A549 (cell line): ENCODE measurements at regions of chr3 and their contacts with region 1.

Region 1: GRCh38 chr3:107271787-107272387 is 105.4 kb upstream of the CCDC54 start:
- DNase-seq: peak; percentile 21 to 41
- ATAC-seq: peak; percentile 87 to 91
- H3K4me3 ChIP-seq: no peak overlapping the region
- H3K27ac ChIP-seq: no peak overlapping the region
- H3K4me1 ChIP-seq: no peaks in the 10 kb centered on the region
- CTCF ChIP-seq: peak; percentile 73
- EP300 ChIP-seq: no peak
- POLR2A ChIP-seq: no peak
- RAD21 ChIP-seq: peak; percentile 74 to 82

Region 2: DNA sequence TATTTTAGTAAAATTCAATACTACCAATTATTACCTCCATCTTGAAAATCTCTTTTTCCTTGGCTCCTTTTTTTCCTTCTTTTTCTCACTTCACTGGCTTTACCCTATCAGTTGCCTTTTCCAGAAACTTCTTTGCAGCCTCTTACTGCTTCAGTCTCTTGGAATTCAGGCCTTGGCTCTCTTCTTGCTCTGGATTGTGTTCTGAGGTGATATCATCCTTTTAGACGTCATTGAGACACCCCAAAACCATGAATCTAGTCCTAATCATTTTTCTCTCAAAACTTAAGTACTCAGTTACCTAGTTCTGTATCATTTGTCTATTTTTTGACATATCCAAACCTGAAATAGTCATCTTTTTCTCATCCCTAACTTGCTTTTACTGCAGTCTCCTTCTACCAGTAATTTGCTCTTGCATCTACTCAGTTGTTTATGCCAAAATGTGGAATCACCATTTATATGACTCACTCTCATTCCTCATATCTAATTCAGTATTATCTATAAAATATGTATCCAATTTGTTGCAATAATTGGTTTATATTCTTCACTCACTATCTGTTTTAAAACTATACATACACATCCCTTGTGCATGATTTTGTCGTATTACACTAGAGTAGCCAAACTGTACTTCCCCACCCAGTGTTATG is 597.8 kb before region 1 on chr3:
- CTCF ChIA-PET with region 1: no interaction called
- POLR2A ChIA-PET with region 1: no interaction called
- DNase-seq: no peak
- ATAC-seq: no peak
- H3K4me3 ChIP-seq: no peak overlapping the region
- H3K27ac ChIP-seq: no peak overlapping the region
- H3K4me1 ChIP-seq: no peaks in the 10 kb centered on the region
- CTCF ChIP-seq: no peak
- EP300 ChIP-seq: no peak
- POLR2A ChIP-seq: no peak
- RAD21 ChIP-seq: no peak

Region 3: DNA sequence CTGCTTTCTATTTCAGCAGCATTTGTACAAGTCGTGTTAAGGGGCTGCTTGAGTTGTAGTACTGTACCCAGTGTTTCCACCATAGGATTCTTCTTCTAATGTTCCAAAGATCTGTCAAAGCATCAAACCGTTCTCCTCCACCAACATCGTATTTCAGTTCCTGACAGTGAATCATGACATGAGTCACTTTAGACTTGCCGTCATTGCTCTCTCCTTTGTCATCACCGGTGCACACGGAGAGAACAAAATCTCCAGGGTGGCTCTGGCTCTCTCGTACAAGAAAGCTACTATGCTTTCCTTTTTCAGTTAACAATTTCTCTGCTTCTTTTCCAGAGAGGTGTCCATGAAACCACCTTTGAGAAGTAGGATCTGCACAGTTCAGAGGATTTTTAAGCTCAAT is 165.6 kb before region 1 on chr3:
- CTCF ChIA-PET with region 1: no interaction called
- POLR2A ChIA-PET with region 1: no interaction called
- DNase-seq: peak; percentile 10 to 22
- ATAC-seq: peak; percentile 64 to 86; a peak in 5 of 6 replicates
- H3K4me3 ChIP-seq: no peak overlapping the region
- H3K27ac ChIP-seq: no peak overlapping the region; a peak in 1 of 6 replicates
- H3K4me1 ChIP-seq: no peaks in the 10 kb centered on the region
- CTCF ChIP-seq: no peak
- EP300 ChIP-seq: no peak
- POLR2A ChIP-seq: no peak
- RAD21 ChIP-seq: no peak

Region 4: GRCh38 chr3:107258300-107258699 is 13.6 kb before region 1 on chr3:
- CTCF ChIA-PET with region 1: interaction called, 16 read pairs
- POLR2A ChIA-PET with region 1: no interaction called
- DNase-seq: no peak
- ATAC-seq: no peak
- H3K4me3 ChIP-seq: no peak overlapping the region
- H3K27ac ChIP-seq: no peak overlapping the region
- H3K4me1 ChIP-seq: no peaks in the 10 kb centered on the region
- CTCF ChIP-seq: no peak
- EP300 ChIP-seq: no peak
- POLR2A ChIP-seq: no peak
- RAD21 ChIP-seq: no peak

Region 5: DNA sequence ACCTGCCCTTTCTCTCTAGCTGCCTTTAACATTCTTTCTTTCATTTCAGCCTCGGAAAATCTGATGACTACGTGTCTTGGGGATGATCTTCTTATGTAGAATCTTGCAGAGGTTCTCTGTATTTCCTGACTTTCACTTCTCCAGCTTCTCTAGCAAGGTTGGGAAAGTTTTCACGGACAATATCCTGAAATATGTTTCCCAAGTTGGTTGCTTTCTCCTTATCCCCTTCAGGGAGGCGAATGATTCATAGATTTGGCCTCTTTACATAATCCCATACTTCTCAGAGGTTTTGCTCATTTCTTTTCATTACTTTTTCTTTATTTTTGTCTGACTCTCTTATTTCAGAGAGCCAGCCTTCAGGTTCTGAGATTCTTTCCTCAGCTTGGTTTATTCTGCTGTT is 43.3 kb after region 1 on chr3:
- CTCF ChIA-PET with region 1: interaction called, 13 read pairs
- POLR2A ChIA-PET with region 1: no interaction called
- DNase-seq: no peak
- ATAC-seq: no peak
- H3K4me3 ChIP-seq: no peak overlapping the region
- H3K27ac ChIP-seq: no peak overlapping the region
- H3K4me1 ChIP-seq: no peaks in the 10 kb centered on the region
- CTCF ChIP-seq: no peak
- EP300 ChIP-seq: no peak
- POLR2A ChIP-seq: no peak
- RAD21 ChIP-seq: no peak

Region 6: GRCh38 chr3:107377151-107377550 is 105.3 kb after region 1 on chr3 and contains the start of gene CCDC54:
- CTCF ChIA-PET with region 1: no interaction called
- POLR2A ChIA-PET with region 1: no interaction called
- DNase-seq: peak in 1 of 2 experiments; percentile 9
- ATAC-seq: no peak
- H3K4me3 ChIP-seq: no peak within 1 kb of the TSS
- H3K27ac ChIP-seq: no peak within 1 kb of the TSS
- H3K4me1 ChIP-seq: no peaks in the 10 kb centered on the region
- CTCF ChIP-seq: no peak
- EP300 ChIP-seq: no peak
- POLR2A ChIP-seq: no peak
- RAD21 ChIP-seq: no peak
- polyA plus RNA-seq, gene CCDC54: not detected in 2 replicates

Region 7: GRCh38 chr3:107387555-107387954 is 115.7 kb after region 1 on chr3:
- CTCF ChIA-PET with region 1: no interaction called
- POLR2A ChIA-PET with region 1: no interaction called
- DNase-seq: no peak
- ATAC-seq: no peak
- H3K4me3 ChIP-seq: no peak overlapping the region
- H3K27ac ChIP-seq: no peak overlapping the region
- H3K4me1 ChIP-seq: no peaks in the 10 kb centered on the region
- CTCF ChIP-seq: no peak
- EP300 ChIP-seq: no peak
- POLR2A ChIP-seq: no peak
- RAD21 ChIP-seq: no peak

Region 8: DNA sequence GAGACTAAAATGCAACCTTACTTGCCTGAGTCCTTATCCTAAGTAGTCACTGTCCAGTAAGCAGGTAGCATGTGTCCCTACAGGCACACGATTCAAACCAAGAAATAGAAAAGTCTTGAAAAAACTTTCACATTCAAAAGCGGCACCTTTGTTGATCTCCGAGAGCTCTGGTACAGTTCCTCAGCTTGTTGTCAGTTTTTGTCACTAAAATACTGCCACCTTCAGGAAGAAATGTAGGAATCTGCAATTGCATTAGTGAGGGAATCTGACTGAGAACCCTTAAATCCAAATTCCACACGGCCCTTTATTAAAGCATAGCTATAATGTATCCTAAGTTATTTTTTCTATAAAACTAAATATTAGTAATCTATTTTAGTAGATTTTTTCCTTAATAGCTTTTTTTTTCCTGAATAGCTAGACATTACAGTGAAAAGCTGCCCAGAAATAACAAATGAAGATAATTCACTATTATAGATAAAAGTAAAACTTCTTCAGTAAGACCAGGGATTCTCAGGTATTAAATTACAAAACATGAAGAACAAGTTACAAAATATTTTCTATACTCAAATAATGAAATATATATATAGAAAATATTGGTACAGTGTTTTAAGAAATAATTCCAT is 149.4 kb after region 1 on chr3:
- CTCF ChIA-PET with region 1: interaction called, 89 read pairs
- POLR2A ChIA-PET with region 1: interaction called, 3 read pairs
- DNase-seq: peak in 1 of 2 experiments; percentile 66
- ATAC-seq: peak; percentile 81 to 91
- H3K4me3 ChIP-seq: peak overlapping the region; percentile 27; the same call in 1 of the 3 replicates
- H3K27ac ChIP-seq: 0 out of 6 replicates have a peak overlapping the region, but pooled peaks of 1 of the 2 experiments have one; percentile 61
- H3K4me1 ChIP-seq: no peaks in the 10 kb centered on the region
- CTCF ChIP-seq: peak; percentile 80
- EP300 ChIP-seq: no peak
- POLR2A ChIP-seq: no peak
- RAD21 ChIP-seq: peak; percentile 66 to 67

Region 9: DNA sequence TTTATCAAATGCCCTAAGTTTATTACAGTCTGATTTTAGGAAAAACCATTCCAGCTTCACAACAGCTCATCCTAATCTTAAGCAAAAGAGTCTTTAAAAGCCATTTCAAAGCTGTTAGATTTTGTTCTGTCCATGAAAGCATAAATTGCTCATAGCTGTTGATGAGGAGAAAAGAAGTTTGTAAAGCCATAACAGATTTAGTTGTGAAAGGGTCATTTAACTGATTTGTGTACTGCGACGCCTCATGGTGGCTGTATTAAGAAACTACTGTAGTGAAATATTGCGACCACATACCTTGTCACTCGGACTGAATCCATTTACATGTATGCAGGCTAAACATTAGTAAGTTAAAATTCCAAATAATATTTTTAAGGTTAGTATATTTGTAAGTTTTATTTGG is 271.8 kb after region 1 on chr3:
- CTCF ChIA-PET with region 1: interaction called, 10 read pairs
- POLR2A ChIA-PET with region 1: no interaction called
- DNase-seq: peak in 1 of 2 experiments; percentile 51
- ATAC-seq: peak in 1 of 2 experiments; percentile 51; a peak in 2 of 6 replicates
- H3K4me3 ChIP-seq: no peak overlapping the region
- H3K27ac ChIP-seq: no peak overlapping the region
- H3K4me1 ChIP-seq: no peaks in the 10 kb centered on the region
- CTCF ChIP-seq: peak; percentile 49
- EP300 ChIP-seq: no peak
- POLR2A ChIP-seq: no peak
- RAD21 ChIP-seq: peak; percentile 49